CD4-positive, alpha-beta memory T cell (primary cell): ENCODE measurements at regions of chr3 and their contacts with region 1.

Region 1: DNA sequence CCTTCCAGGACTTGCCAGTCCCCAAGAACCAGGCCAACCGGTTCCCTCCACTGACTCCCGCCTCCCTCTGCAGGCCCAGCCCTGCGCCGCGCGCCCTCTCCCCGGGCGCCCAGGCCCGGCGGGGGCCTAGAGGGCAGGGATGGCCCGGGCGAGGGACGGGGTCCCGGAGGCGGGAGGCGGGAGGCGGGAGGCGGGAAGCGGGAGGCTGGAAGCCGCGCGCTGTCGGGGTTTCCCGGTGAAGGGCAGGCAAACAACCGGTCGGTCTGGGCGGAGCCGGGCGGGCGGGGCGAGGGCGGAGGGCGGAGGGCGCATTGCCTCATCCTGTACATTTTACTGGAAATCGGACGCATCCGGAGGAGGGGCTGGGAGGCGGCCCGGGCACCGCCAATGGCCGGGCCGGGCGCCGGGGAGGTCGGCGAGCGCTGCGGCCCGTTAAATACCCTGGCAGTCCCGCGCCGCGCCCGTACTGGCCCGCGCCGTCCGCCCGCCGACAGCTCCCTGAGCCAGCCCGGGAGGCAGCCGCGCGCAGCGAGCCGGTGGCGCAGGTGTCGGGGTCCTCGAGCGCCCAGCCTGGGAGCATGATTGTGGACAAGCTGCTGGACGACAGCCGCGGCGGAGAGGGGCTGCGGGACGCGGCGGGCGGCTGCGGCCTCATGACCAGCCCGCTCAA is at the start of gene NFKBIZ:
- DNase-seq: peak; percentile 89 to 96 (median 91)
- H3K4me3 ChIP-seq: peak within 1 kb of the TSS; percentile 70 to 100
- H3K4me3 Mint-ChIP-seq: peak within 1 kb of the TSS; percentile 93 to 100 (median 98)
- H3K27ac ChIP-seq: peak within 1 kb of the TSS; percentile 99
- H3K27ac Mint-ChIP-seq: peak within 1 kb of the TSS; percentile 97 to 100 (median 99)
- H3K4me1 ChIP-seq: peaks cover 33% of the 10 kb centered on the region
- H3K4me1 Mint-ChIP-seq: peaks cover 26 to 56% (median 35%) of the 10 kb centered on the region in 4 donors
- H3K27me3 ChIP-seq: no peaks in the 10 kb centered on the region
- H3K27me3 Mint-ChIP-seq: no peaks in the 10 kb centered on the region
- total RNA-seq, gene NFKBIZ: 75.9 to 79.5 TPM

Region 2: DNA sequence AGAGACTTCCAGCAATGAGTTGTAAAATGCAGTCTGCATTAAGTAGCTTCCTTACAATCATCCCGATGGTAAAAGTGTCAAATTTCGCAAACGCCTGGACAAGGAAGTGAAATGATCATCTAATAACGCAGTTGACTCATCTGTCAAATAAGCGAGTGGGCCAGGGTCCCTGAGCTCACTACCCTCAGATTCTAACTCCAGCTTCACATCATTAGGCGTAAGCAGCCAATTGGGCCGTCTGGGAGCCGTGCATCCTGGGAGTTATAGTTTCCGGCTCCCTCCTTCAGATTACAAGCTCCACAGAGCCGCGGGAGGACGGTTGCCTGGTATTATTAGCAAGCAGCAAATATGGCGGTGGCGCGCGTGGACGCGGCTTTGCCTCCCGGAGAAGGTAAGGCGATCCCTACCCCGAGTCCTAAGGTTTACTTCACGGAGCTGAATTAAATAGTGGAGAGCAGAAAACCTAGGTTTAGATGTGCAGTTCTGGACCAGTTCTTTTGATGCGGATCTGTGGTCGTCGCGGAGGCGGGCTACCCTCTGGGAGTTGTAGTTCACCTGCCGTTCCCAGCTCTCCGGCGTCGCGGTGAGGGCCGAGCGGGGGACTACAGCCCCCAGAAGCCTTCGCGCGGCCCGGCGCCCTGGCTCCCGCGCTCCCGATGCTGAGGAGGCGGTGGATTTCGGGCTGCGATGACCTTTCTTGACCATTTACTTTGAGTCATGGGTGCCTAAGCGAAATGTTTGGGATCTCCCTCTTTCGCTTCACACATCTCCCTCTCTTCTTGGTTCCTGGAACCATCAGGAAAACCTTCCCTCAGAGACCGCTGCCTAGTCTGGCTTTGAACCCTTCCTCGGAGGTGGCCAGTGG is 124.6 kb before region 1 on chr3 and contains the start of gene CEP97:
- CTCF ChIA-PET with region 1: interaction called, 5 read pairs
- POLR2A ChIA-PET with region 1: interaction called, 21 read pairs
- intact Hi-C with region 1: loop called (anchors 1 kb)
- DNase-seq: peak; percentile 87 to 92 (median 90)
- H3K4me3 ChIP-seq: peak within 1 kb of the TSS; percentile 97 to 99
- H3K4me3 Mint-ChIP-seq: peak within 1 kb of the TSS; percentile 98 to 100 (median 99)
- H3K27ac ChIP-seq: peak within 1 kb of the TSS; percentile 90
- H3K27ac Mint-ChIP-seq: peak within 1 kb of the TSS; percentile 92 to 99 (median 99)
- H3K4me1 ChIP-seq: peaks cover 52% of the 10 kb centered on the region
- H3K4me1 Mint-ChIP-seq: peaks cover 31 to 56% (median 37%) of the 10 kb centered on the region in 4 donors
- H3K27me3 ChIP-seq: no peaks in the 10 kb centered on the region
- H3K27me3 Mint-ChIP-seq: no peaks in the 10 kb centered on the region
- total RNA-seq, gene CEP97: 14.8 to 16.8 TPM

Region 3: DNA sequence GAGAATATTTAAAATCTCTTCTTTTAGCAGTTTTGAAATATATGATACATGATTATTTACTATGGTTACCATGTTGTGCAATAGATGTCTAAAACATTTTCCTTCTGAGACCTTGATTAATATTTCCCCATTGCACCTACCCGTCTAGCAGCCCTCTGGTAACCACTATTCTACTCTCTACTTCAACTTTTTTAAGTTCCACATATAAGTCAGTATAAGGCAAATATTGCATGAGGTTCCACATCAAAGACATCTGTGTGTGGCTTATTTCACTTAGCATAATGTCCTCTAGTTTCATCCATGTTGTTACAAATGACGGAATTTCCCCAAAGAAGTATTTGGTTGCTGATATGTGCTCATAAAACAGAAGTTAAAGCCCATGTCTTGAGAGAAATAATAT is 29.4 kb before region 1 on chr3:
- CTCF ChIA-PET with region 1: interaction called, 17 read pairs
- POLR2A ChIA-PET with region 1: interaction called, 17 read pairs
- intact Hi-C with region 1: no loop called
- DNase-seq: no peak
- H3K4me3 ChIP-seq: no peak overlapping the region
- H3K4me3 Mint-ChIP-seq: no peak overlapping the region
- H3K27ac ChIP-seq: no peak overlapping the region
- H3K27ac Mint-ChIP-seq: peak overlapping the region in 2 of 7 donors; percentile 41 to 74
- H3K4me1 ChIP-seq: peaks cover 2% of the 10 kb centered on the region
- H3K4me1 Mint-ChIP-seq: peaks cover 7 to 16% (median 12%) of the 10 kb centered on the region in 4 donors
- H3K27me3 ChIP-seq: no peaks in the 10 kb centered on the region
- H3K27me3 Mint-ChIP-seq: no peaks in the 10 kb centered on the region

Region 4: GRCh38 chr3:101838691-101839090 is 10.5 kb before region 1 on chr3:
- CTCF ChIA-PET with region 1: interaction called, 12 read pairs
- POLR2A ChIA-PET with region 1: interaction called, 20 read pairs
- intact Hi-C with region 1: no loop called
- DNase-seq: no peak
- H3K4me3 ChIP-seq: no peak overlapping the region
- H3K4me3 Mint-ChIP-seq: no peak overlapping the region
- H3K27ac ChIP-seq: no peak overlapping the region
- H3K27ac Mint-ChIP-seq: peak overlapping the region in 1 of 7 donors; percentile 2
- H3K4me1 ChIP-seq: peaks cover 5% of the 10 kb centered on the region
- H3K4me1 Mint-ChIP-seq: peaks cover 11 to 22% (median 12%) of the 10 kb centered on the region in 4 donors
- H3K27me3 ChIP-seq: no peaks in the 10 kb centered on the region
- H3K27me3 Mint-ChIP-seq: no peaks in the 10 kb centered on the region

Region 5: GRCh38 chr3:101936419-101937356 is 87.5 kb after region 1 on chr3:
- CTCF ChIA-PET with region 1: interaction called, 4 read pairs
- POLR2A ChIA-PET with region 1: interaction called, 52 read pairs
- intact Hi-C with region 1: loop called (anchors 1 kb)
- DNase-seq: peak; percentile 52 to 71 (median 65)
- H3K4me3 ChIP-seq: no peak overlapping the region
- H3K4me3 Mint-ChIP-seq: peak overlapping the region; percentile 61 to 87 (median 71)
- H3K27ac ChIP-seq: no peak overlapping the region
- H3K27ac Mint-ChIP-seq: peak overlapping the region; percentile 75 to 92 (median 86)
- H3K4me1 ChIP-seq: peaks cover 63% of the 10 kb centered on the region
- H3K4me1 Mint-ChIP-seq: peaks cover 18 to 26% (median 22%) of the 10 kb centered on the region in 4 donors
- H3K27me3 ChIP-seq: no peaks in the 10 kb centered on the region
- H3K27me3 Mint-ChIP-seq: no peaks in the 10 kb centered on the region

Region 6: GRCh38 chr3:102141096-102141927 is 292.1 kb after region 1 on chr3:
- CTCF ChIA-PET with region 1: no interaction called
- POLR2A ChIA-PET with region 1: no interaction called
- intact Hi-C with region 1: no loop called
- DNase-seq: no peak
- H3K4me3 ChIP-seq: no peak overlapping the region
- H3K4me3 Mint-ChIP-seq: no peak overlapping the region
- H3K27ac ChIP-seq: no peak overlapping the region
- H3K27ac Mint-ChIP-seq: no peak overlapping the region
- H3K4me1 ChIP-seq: no peaks in the 10 kb centered on the region
- H3K4me1 Mint-ChIP-seq: peaks cover 0 to 4% (median 0%) of the 10 kb centered on the region in 4 donors
- H3K27me3 ChIP-seq: no peaks in the 10 kb centered on the region
- H3K27me3 Mint-ChIP-seq: no peaks in the 10 kb centered on the region